ENCODE measurements at regions of chr4 and their contacts with region 1.

Region 1: GRCh38 chr4:2536193-2537010 is at the start of gene FAM193A:
- DNase-seq: peak; percentile 100
- ATAC-seq: peak; percentile 97
- H3K4me3 Mint-ChIP-seq: peak within 1 kb of the TSS; percentile 87
- H3K27ac Mint-ChIP-seq: peak within 1 kb of the TSS; percentile 88
- H3K4me1 Mint-ChIP-seq: peaks cover 24% of the 10 kb centered on the region
- H3K27me3 Mint-ChIP-seq: no peaks in the 10 kb centered on the region
- total RNA-seq, gene FAM193A: 22.1 to 30.1 TPM

Region 2: GRCh38 chr4:2008875-2009703 is 527.3 kb before region 1 on chr4 and contains the start of gene NELFA:
- CTCF ChIA-PET with region 1: no interaction called
- POLR2A ChIA-PET with region 1: no interaction called
- intact Hi-C with region 1: loop called in 1 of 2 experiments (anchors 1 kb)
- DNase-seq: peak; percentile 97
- ATAC-seq: peak; percentile 81
- H3K4me3 Mint-ChIP-seq: peak within 1 kb of the TSS; percentile 87
- H3K27ac Mint-ChIP-seq: peak within 1 kb of the TSS; percentile 90
- H3K4me1 Mint-ChIP-seq: peaks cover 34% of the 10 kb centered on the region
- H3K27me3 Mint-ChIP-seq: no peaks in the 10 kb centered on the region
- total RNA-seq, gene NELFA: 41.6 to 48.3 TPM

Region 3: GRCh38 chr4:2412885-2413716 is 123.3 kb before region 1 on chr4:
- CTCF ChIA-PET with region 1: no interaction called
- POLR2A ChIA-PET with region 1: interaction called, 4 read pairs
- intact Hi-C with region 1: loop called (anchors 1 to 5 kb)
- DNase-seq: peak; percentile 94
- ATAC-seq: peak; percentile 82
- H3K4me3 Mint-ChIP-seq: peak overlapping the region; percentile 70
- H3K27ac Mint-ChIP-seq: peak overlapping the region; percentile 97
- H3K4me1 Mint-ChIP-seq: peaks cover 69% of the 10 kb centered on the region
- H3K27me3 Mint-ChIP-seq: peaks cover 9% of the 10 kb centered on the region

Region 4: DNA sequence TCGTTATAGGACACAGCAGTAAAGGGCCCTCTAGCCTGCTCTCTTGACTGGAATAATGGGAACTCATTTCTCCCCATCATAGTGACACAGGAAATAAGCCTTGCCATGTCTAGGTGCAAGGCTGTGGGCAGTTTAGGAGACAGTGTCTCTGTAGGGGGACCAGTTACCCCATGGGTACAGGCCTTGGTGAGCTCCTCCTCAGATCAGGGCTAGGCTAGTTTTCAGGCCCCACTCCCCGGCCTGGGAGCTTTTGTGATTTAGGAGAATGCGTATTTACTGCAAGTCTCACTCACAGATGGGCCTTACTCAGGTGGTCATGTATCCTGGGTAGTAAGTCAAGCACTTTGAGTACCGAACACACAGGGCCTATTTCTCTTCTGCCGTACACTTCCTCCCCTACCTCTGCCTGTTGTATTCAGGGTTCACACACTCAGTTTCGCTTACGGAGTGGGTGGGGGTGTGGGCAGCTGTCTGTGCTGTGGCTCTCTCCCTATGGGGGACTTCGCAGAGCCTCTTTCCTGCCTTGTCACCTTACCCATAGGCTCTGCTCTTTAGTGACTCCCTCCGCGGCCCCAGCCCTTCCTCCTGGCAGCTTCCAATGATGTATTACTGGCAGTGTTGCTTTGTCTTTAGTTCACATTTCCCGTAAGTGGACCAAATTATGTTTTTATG is 34.3 kb after region 1 on chr4:
- CTCF ChIA-PET with region 1: interaction called, 3 read pairs
- POLR2A ChIA-PET with region 1: no interaction called
- intact Hi-C with region 1: loop called in 1 of 2 experiments (anchors 2 kb)
- DNase-seq: peak; percentile 85
- ATAC-seq: peak; percentile 99
- H3K4me3 Mint-ChIP-seq: peak overlapping the region; percentile 1
- H3K27ac Mint-ChIP-seq: peak overlapping the region; percentile 90
- H3K4me1 Mint-ChIP-seq: peaks cover 55% of the 10 kb centered on the region
- H3K27me3 Mint-ChIP-seq: no peaks in the 10 kb centered on the region

Region 5: GRCh38 chr4:2755837-2756694 is 219.7 kb after region 1 on chr4 and contains the start of gene TNIP2:
- CTCF ChIA-PET with region 1: no interaction called
- POLR2A ChIA-PET with region 1: interaction called, 8 read pairs
- intact Hi-C with region 1: loop called in 1 of 2 experiments (anchors 1 kb)
- DNase-seq: peak; percentile 91
- ATAC-seq: peak; percentile 78
- H3K4me3 Mint-ChIP-seq: peak within 1 kb of the TSS; percentile 79
- H3K27ac Mint-ChIP-seq: peak within 1 kb of the TSS; percentile 66
- H3K4me1 Mint-ChIP-seq: peaks cover 33% of the 10 kb centered on the region
- H3K27me3 Mint-ChIP-seq: no peaks in the 10 kb centered on the region
- total RNA-seq, gene TNIP2: 50.6 to 59.4 TPM

Region 6: GRCh38 chr4:3074078-3074795 is 537.8 kb after region 1 on chr4 and contains the starts of genes HTT and HTT-AS:
- CTCF ChIA-PET with region 1: no interaction called
- POLR2A ChIA-PET with region 1: no interaction called
- intact Hi-C with region 1: loop called in 1 of 2 experiments (anchors 10 kb)
- DNase-seq: peak; percentile 100
- ATAC-seq: peak; percentile 89
- H3K4me3 Mint-ChIP-seq: peak within 1 kb of the TSS; percentile 95
- H3K27ac Mint-ChIP-seq: peak within 1 kb of the TSS; percentile 90
- H3K4me1 Mint-ChIP-seq: peaks cover 24% of the 10 kb centered on the region
- H3K27me3 Mint-ChIP-seq: no peaks in the 10 kb centered on the region
- total RNA-seq, gene HTT: 80.1 to 127 TPM
- total RNA-seq, gene HTT-AS: not detected

Region 7: DNA sequence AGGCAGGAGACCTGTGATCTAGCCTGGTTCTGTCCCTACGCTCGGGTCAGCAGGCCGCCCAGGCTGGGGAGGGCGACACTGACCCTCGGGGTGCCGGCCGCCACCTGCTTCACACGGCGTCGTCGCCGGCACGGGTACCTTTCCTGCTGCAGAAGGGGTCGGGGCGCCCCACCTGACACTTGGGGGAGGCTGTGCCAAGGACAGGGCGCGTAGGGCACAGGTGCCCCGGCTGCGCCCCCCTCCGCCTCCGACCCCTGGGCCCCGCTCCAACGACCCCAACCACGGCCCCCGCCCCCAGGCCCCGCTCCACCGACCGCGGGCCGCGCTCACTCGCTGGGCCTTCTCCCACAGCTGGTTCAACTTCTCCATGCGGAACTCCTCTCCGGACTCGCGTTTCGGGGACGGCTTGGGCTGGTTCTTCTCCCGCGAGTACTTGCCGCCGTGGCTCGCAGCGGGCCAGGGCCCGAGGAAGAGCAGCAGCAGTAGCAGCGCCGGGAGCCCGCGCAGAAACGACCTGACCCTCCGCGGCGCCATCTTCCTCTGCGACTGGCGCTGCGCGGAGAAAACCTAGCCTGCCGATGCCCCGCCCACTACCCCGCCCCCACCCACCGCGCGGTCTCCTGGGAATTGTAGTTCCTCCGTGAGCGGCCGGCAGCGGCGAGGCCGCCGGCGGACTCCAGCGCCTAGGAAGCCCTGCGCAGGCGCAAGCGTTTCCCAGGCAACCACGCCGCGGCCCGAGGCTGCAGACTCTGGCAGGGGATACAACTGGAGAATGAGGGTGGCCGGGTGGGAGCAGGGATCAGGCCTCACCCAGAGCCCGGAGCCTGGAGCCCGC is 995.7 kb after region 1 on chr4 and contains the start of gene LRPAP1:
- CTCF ChIA-PET with region 1: no interaction called
- POLR2A ChIA-PET with region 1: no interaction called
- intact Hi-C with region 1: loop called in 1 of 2 experiments (anchors 10 kb)
- DNase-seq: peak; percentile 92
- ATAC-seq: peak; percentile 94
- H3K4me3 Mint-ChIP-seq: peak within 1 kb of the TSS; percentile 100
- H3K27ac Mint-ChIP-seq: peak within 1 kb of the TSS; percentile 97
- H3K4me1 Mint-ChIP-seq: peaks cover 20% of the 10 kb centered on the region
- H3K27me3 Mint-ChIP-seq: no peaks in the 10 kb centered on the region
- total RNA-seq, gene LRPAP1: 50.8 to 53.4 TPM